RWPE1 (cell line): ENCODE measurements at regions of chr5 and their contacts with region 1.

Region 1: DNA sequence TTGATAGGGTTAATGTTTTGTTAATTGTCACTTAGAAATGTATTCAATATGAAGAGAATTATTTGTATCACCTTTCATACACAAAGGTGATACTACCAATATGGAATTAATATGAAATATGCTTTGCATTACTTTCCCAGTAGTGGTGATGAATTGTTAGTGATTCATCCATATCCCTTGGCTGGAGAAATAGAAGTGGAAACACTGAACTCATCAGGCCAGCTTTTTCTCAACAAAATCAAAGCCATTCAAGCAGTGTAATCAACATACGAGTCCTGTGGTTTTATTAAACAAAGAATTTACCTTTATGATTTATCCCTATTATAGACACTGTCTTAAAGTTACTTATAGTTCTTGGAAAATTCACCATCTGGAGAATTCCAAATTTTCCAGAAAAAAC is 264.0 kb upstream of the MEF2C start:
- DNase-seq: no peak
- H3K27ac ChIP-seq: no peak overlapping the region
- CTCF ChIP-seq: no peak

Region 2: DNA sequence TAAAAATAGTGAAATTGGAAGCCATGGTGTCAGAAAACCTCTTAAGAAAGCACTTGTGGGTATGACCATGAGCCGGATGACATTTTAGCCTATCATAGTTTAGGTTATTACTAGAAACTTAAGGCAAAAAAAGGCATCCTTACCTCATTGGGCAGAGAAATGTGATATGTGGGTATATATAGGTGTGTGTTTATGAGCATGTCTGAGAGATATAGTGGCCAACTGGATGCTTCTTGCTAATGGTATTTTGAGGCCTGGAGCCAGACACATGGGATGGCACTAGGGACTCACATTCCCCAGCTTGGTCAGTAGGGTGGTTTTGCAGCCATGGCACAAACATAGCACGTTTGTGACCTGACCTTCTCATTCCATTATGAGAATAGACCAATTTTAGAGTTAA is 31.5 kb after region 1 on chr5:
- CTCF ChIA-PET with region 1: no interaction called
- POLR2A ChIA-PET with region 1: no interaction called
- DNase-seq: no peak
- H3K27ac ChIP-seq: no peak overlapping the region
- CTCF ChIP-seq: no peak

Region 3: DNA sequence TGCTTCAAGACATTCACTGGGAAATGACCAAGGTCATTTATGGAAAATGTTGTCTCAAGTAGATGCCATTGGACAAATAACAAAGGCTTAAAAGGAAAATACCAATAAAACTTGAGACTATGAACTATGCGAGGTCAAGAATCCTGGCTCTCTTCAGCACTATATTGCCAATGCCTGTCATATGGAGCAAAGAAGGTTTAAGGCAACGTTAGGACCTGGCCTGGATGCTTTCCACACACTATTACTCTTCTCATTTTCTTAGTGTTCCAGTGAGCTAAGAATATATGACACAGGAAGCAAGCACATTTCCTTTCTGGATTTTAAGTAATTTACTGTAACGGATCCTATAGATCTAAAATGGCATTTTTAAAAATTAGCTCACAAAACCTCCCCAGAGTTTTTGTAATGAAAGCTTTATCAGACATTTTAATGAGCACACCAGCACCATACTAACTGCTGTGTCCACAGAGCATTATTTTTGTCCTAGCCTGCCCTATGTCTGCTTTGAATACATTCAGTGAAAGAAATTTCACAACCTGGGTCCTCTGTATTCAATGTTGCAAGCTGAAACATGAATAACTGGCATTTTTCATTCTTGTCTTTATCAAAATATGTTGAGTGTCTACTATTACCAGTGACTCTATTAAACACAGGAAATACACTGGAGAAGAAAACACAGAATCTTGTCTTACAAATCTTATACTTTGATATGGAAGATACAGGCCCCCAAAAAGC is 946.9 kb after region 1 on chr5:
- CTCF ChIA-PET with region 1: no interaction called
- POLR2A ChIA-PET with region 1: interaction called, 37 read pairs
- DNase-seq: peak; percentile 52
- H3K27ac ChIP-seq: no peak overlapping the region
- CTCF ChIP-seq: no peak